GM23248 (cell line): ENCODE measurements at regions of chr2 and their contacts with region 1.

Region 1: GRCh38 chr2:134118279-134119116 is 135.4 kb upstream of the MGAT5 start:
- DNase-seq: peak; percentile 97
- H3K4me3 ChIP-seq: no peak overlapping the region
- H3K27ac ChIP-seq: peak overlapping the region; percentile 54
- H3K4me1 ChIP-seq: peaks cover 11% of the 10 kb centered on the region
- H3K27me3 ChIP-seq: peaks cover 10% of the 10 kb centered on the region

Region 2: GRCh38 chr2:134232868-134233727 is 114.6 kb after region 1 on chr2:
- in situ Hi-C with region 1: loop called (anchors 10 kb)
- DNase-seq: peak; percentile 43
- H3K4me3 ChIP-seq: no peak overlapping the region
- H3K27ac ChIP-seq: peak overlapping the region; percentile 42
- H3K4me1 ChIP-seq: peaks cover 47% of the 10 kb centered on the region
- H3K27me3 ChIP-seq: no peaks in the 10 kb centered on the region

Region 3: GRCh38 chr2:134372611-134373131 is 254.2 kb after region 1 on chr2:
- in situ Hi-C with region 1: no loop called
- DNase-seq: peak; percentile 92
- H3K4me3 ChIP-seq: no peak overlapping the region
- H3K27ac ChIP-seq: peak overlapping the region; percentile 50
- H3K4me1 ChIP-seq: peaks cover 28% of the 10 kb centered on the region
- H3K27me3 ChIP-seq: no peaks in the 10 kb centered on the region

Region 4: DNA sequence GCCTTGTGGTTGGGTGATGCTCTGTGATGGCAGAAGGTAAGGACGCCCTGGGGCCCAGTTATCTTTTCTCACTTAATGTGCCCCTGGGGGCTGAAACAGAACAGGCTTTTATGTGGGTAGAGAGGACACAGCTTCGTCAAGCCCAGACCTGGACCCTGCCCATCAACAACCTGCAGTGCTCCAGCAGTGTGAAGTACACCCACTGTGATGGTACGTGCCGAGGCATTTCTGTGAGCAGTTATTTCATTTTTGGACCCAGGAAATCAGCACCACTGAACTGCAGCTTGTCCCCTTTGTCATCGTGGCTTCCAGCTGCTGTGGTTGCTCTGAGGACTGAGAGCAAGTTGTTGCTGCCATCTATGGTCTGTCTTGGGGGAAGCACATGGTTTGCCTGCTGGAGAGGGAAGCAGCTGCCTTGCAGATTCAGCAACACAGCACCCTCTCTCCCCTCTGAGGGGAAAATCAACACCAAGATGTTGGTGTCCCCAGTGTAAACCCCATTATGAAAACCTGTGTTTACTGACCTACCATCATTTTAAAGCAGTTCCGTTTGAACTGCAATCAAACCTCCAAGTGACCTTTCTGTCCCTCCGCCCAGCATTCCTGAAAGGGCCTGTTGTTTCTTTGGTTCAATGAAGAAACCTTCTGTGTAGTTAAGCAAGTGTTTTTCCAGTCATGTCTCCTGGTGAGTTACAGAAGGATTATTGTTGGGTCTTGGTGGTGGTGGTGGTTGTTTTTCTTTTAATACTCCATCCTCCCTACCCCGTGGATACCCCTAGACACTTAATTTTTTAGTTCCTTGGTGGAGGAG is 293.5 kb after region 1 on chr2:
- in situ Hi-C with region 1: loop called (anchors 5 kb)
- DNase-seq: peak; percentile 88
- H3K4me3 ChIP-seq: no peak overlapping the region
- H3K27ac ChIP-seq: no peak overlapping the region
- H3K4me1 ChIP-seq: peaks cover 39% of the 10 kb centered on the region
- H3K27me3 ChIP-seq: no peaks in the 10 kb centered on the region

Region 5: GRCh38 chr2:134897932-134898331 is 779.4 kb after region 1 on chr2:
- in situ Hi-C with region 1: loop called (anchors 25 kb)
- DNase-seq: peak; percentile 46
- H3K4me3 ChIP-seq: no peak overlapping the region
- H3K27ac ChIP-seq: no peak overlapping the region
- H3K4me1 ChIP-seq: no peaks in the 10 kb centered on the region
- H3K27me3 ChIP-seq: no peaks in the 10 kb centered on the region